Mammary epithelial cell (primary cell): ENCODE measurements at regions of chr1 and their contacts with region 1.

Region 1: DNA sequence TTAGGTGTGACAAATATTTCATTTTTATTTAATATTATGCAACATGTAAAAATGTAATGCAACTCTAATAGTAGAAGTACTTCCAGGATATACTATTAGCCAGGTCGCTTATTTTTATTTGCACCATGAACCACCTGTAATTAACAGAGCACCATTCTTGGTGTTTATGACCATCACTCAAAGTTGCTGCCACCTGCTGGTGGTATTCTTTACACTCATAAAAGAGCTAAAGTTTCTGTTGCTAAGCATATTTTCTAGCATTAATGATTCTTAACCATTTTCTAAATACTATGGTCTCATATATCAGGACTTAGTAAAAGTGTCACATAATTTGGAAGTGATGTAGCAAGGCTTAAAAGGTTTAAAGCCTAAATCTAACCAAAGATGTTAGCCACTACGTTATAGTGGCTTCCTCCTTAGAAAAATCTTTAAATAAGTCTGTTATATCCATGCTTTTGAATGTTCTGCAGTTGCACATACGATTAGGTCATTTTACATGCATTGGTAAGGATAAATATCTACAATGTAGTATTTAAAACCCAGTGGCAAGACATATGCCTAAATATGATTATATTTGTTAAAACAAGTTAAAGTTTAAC is 244.5 kb downstream of the NEGR1 start:
- DNase-seq: peak; percentile 23
- H3K4me3 ChIP-seq: no peak overlapping the region
- H3K27ac ChIP-seq: no peak overlapping the region
- H3K4me1 ChIP-seq: no peaks in the 10 kb centered on the region
- H3K27me3 ChIP-seq: peaks cover 1% of the 10 kb centered on the region
- CTCF ChIP-seq: peak; percentile 62

Region 2: DNA sequence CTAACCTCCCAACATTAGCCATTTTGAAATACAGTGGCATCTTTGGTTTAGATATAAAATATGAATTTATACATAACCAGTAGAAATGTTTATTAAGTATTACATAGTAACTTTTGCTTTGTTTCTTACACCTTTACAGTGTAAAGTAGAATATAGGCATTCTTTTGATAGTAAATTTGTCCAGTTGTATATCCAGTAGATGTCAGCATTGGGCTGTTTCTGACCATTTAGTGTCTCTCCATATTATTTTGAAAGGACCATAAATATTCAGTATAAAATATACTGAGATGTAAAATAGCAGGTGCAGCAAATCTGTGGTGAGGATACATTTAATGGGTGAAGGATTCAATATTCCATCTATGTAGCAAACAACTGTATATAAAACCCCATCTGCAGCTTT is 841.2 kb before region 1 on chr1:
- CTCF ChIA-PET with region 1: no interaction called
- dilution Hi-C with region 1: no loop called
- in situ Hi-C with region 1: loop called in 1 of 2 experiments (anchors 25 kb)
- intact Hi-C with region 1: loop called (anchors 2 kb)
- DNase-seq: peak; percentile 11
- H3K4me3 ChIP-seq: no peak overlapping the region
- H3K27ac ChIP-seq: no peak overlapping the region
- H3K4me1 ChIP-seq: no peaks in the 10 kb centered on the region
- H3K27me3 ChIP-seq: peaks cover 2% of the 10 kb centered on the region
- CTCF ChIP-seq: peak; percentile 34 to 55

Region 3: DNA sequence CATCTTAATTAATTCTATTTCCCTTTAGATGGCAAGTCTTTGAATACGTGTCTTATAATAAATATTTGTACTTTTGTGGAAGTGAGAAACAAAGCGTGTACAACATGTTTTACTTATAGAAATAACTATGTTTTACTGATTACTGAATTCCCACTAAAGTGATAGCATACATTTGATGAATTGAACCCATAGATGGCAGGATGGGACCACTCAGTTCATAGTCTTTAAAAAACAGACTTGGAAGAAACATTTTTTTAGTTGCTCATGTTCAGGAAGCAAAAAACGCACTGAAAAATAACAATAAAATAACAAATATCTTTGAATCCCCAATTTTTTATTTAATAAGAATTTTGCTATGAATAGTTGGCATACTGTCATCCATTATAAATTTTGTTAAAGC is 449.9 kb before region 1 on chr1:
- CTCF ChIA-PET with region 1: no interaction called
- dilution Hi-C with region 1: no loop called
- in situ Hi-C with region 1: loop called (anchors 10 kb)
- intact Hi-C with region 1: loop called (anchors 1 kb)
- DNase-seq: peak; percentile 18
- H3K4me3 ChIP-seq: no peak overlapping the region
- H3K27ac ChIP-seq: no peak overlapping the region
- H3K4me1 ChIP-seq: no peaks in the 10 kb centered on the region
- H3K27me3 ChIP-seq: no peaks in the 10 kb centered on the region
- CTCF ChIP-seq: peak; percentile 34 to 49

Region 4: GRCh38 chr1:71695821-71696220 is 342.0 kb before region 1 on chr1:
- CTCF ChIA-PET with region 1: no interaction called
- dilution Hi-C with region 1: no loop called
- in situ Hi-C with region 1: no loop called
- intact Hi-C with region 1: loop called (anchors 10 kb)
- DNase-seq: no peak
- H3K4me3 ChIP-seq: no peak overlapping the region
- H3K27ac ChIP-seq: no peak overlapping the region
- H3K4me1 ChIP-seq: no peaks in the 10 kb centered on the region
- H3K27me3 ChIP-seq: no peaks in the 10 kb centered on the region
- CTCF ChIP-seq: no peak